ENCODE measurements at regions of chr2 and their contacts with region 1.

Region 1: DNA sequence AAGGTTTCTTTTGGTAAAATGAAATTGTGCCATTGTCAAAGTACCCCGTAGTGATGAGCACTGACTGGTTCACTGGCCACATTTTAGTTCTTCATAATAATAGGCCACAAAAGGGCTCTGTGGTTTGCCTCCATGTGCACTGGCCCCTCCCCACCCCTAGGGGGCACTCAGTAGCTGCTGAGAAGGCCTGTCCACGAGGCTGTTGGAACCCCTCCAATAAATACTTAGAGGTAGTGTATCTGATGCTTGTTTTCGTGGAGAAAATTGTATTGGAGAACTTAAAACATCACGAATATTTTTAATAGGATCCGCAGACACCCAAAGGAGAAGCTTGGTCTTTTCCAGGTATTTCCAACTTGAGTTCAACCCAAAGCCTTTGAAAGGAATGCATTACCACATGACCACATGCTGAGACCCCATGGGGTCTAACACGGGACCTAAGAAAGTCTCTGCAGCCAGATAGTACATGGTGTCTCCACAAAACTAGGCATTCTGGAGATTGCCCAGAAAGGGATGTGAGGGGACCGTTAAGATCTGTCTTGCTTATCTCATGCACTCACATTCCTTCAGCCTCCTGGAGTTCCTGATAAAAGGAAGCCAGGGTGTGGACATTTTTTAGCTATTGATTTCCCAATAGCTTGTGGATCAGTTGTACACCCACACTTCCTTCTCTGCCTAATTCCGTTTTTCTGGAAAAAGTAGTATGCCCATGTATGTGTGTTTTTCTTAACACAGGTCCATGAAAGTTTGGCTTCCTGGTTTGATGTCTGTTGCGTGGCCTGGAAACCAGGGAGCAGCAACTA is 28.5 kb upstream of the NOSTRIN start:
- DNase-seq: peak; percentile 62 to 80
- H3K4me3 ChIP-seq: no peak overlapping the region
- H3K4me3 Mint-ChIP-seq: no peak overlapping the region
- H3K27ac Mint-ChIP-seq: no peak overlapping the region
- H3K4me1 ChIP-seq: peaks cover 11% of the 10 kb centered on the region
- H3K4me1 Mint-ChIP-seq: no peaks in the 10 kb centered on the region
- H3K27me3 ChIP-seq: no peaks in the 10 kb centered on the region
- H3K27me3 Mint-ChIP-seq: no peaks in the 10 kb centered on the region
- CTCF ChIP-seq: peak; percentile 85 to 89

Region 2: GRCh38 chr2:168490015-168490874 is 283.7 kb before region 1 on chr2:
- CTCF ChIA-PET with region 1: no interaction called
- POLR2A ChIA-PET with region 1: no interaction called
- intact Hi-C with region 1: no loop called
- DNase-seq: no peak
- H3K4me3 ChIP-seq: no peak overlapping the region
- H3K4me3 Mint-ChIP-seq: peak overlapping the region; percentile 12
- H3K27ac Mint-ChIP-seq: peak overlapping the region; percentile 56
- H3K4me1 ChIP-seq: peaks cover 52% of the 10 kb centered on the region
- H3K4me1 Mint-ChIP-seq: peaks cover 59% of the 10 kb centered on the region
- H3K27me3 ChIP-seq: no peaks in the 10 kb centered on the region
- H3K27me3 Mint-ChIP-seq: no peaks in the 10 kb centered on the region
- CTCF ChIP-seq: no peak

Region 3: GRCh38 chr2:168573128-168573903 is 200.6 kb before region 1 on chr2:
- CTCF ChIA-PET with region 1: no interaction called
- POLR2A ChIA-PET with region 1: no interaction called
- intact Hi-C with region 1: no loop called
- DNase-seq: no peak
- H3K4me3 ChIP-seq: no peak overlapping the region
- H3K4me3 Mint-ChIP-seq: no peak overlapping the region
- H3K27ac Mint-ChIP-seq: no peak overlapping the region
- H3K4me1 ChIP-seq: no peaks in the 10 kb centered on the region
- H3K4me1 Mint-ChIP-seq: no peaks in the 10 kb centered on the region
- H3K27me3 ChIP-seq: no peaks in the 10 kb centered on the region
- H3K27me3 Mint-ChIP-seq: no peaks in the 10 kb centered on the region
- CTCF ChIP-seq: no peak

Region 4: DNA sequence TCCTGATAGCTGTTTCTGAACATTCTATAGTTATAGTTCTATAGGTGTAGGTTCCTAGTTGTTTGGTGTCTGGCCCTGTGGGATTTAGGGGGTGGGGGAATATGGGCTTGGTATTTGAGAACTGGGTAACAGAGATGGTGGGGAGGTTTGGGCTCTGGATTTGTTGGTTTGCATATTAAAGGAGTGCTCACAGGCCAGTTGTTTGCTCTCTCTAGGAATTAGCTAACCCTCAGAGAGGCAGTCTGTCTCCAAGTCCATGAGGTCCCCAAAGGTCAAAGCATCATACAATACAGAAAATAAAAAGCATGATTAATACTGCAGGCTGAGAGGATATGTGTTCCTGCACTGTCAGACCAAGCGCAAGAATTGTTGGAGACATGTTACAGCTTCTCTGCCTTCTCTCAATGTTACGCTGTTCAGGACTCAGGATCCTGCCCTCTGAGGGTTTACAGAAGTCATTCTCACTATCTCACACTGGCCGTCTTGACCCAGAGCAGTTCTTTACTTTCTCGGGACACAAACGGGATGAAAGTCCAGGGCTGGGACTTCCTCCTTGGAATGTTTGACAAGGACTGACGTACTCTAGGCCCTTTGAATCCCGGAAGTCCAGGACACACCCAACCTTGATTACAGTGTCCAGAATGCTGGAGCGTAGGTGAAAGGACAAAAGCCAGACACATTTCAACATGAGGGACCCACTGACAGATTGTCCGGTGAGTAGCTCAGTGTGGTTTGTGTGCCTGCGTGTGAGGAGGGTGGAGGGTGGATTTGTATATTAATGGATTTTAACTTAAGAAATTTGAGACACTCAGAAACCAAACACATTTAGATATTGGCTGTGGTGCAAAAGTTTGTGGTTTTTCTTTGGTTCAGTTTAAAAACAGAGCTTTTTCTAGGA is 28.3 kb after region 1 on chr2 and contains the start of gene NOSTRIN:
- CTCF ChIA-PET with region 1: interaction called, 6 read pairs
- POLR2A ChIA-PET with region 1: no interaction called
- intact Hi-C with region 1: loop called (anchors 2 kb)
- DNase-seq: peak; percentile 86 to 95
- H3K4me3 ChIP-seq: peak within 1 kb of the TSS; percentile 29
- H3K4me3 Mint-ChIP-seq: peak within 1 kb of the TSS; percentile 71
- H3K27ac Mint-ChIP-seq: peak within 1 kb of the TSS; percentile 96
- H3K4me1 ChIP-seq: peaks cover 44% of the 10 kb centered on the region
- H3K4me1 Mint-ChIP-seq: peaks cover 32% of the 10 kb centered on the region
- H3K27me3 ChIP-seq: no peaks in the 10 kb centered on the region
- H3K27me3 Mint-ChIP-seq: no peaks in the 10 kb centered on the region
- CTCF ChIP-seq: no peak
- total RNA-seq, gene NOSTRIN: 9.6 and 9.8 TPM in 2 replicates

Region 5: DNA sequence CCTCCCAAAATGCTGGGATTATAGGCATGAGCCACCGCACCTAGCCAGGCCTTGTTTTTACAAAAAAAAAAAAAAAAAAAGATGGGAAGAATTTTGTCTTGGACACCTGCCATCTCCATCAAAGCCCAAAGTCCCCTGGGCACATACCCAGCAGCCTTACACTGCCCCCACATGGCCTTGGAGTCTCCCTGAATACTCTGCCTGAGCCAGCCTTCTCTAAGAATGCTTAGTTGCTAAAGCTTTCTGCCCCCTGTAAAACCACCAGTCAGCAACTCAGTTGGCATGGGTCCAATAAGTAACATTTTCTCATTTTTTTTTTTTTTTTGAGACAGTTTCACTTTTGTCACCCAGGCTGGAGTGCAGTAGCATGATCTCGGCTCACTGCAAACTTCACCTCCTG is 75.7 kb after region 1 on chr2:
- CTCF ChIA-PET with region 1: no interaction called
- POLR2A ChIA-PET with region 1: no interaction called
- intact Hi-C with region 1: loop called (anchors 1 kb)
- DNase-seq: peak; percentile 43 to 44
- H3K4me3 ChIP-seq: no peak overlapping the region
- H3K4me3 Mint-ChIP-seq: no peak overlapping the region
- H3K27ac Mint-ChIP-seq: no peak overlapping the region
- H3K4me1 ChIP-seq: no peaks in the 10 kb centered on the region
- H3K4me1 Mint-ChIP-seq: no peaks in the 10 kb centered on the region
- H3K27me3 ChIP-seq: no peaks in the 10 kb centered on the region
- H3K27me3 Mint-ChIP-seq: no peaks in the 10 kb centered on the region
- CTCF ChIP-seq: peak in 1 of 2 experiments; percentile 42

Region 6: DNA sequence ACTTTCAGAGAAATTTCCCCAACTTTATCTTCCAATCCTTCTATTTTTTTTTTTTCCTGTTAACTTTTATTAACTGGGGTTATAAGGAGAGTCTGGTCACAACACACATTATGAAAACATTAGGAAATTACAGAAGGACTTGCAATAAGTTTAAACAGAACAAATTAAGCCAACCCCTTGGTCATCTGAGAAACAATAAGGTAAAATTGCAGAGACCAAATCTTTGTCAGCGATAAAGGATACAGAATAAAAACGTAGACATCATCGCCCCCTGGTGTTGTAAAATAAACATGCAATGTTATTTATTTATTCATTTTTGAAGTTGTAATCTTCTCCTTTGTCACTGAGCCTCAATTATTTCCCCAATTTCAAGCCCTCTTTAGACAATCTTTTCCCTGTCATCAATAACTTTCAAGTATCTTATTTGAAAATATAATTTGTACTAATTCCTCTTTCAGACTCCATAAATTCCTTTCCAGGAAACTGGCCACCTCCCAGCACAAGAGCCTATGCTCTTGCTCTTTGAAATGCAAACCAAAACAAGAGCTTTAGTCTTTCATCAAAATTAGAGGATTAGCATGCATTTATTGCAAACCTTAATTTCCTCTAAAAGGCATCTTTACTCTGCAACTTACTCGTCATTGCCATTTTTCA is 146.7 kb after region 1 on chr2:
- CTCF ChIA-PET with region 1: interaction called, 4 read pairs
- POLR2A ChIA-PET with region 1: no interaction called
- intact Hi-C with region 1: loop called (anchors 1 kb)
- DNase-seq: peak in 1 of 2 experiments; percentile 45
- H3K4me3 ChIP-seq: no peak overlapping the region
- H3K4me3 Mint-ChIP-seq: no peak overlapping the region
- H3K27ac Mint-ChIP-seq: no peak overlapping the region
- H3K4me1 ChIP-seq: no peaks in the 10 kb centered on the region
- H3K4me1 Mint-ChIP-seq: no peaks in the 10 kb centered on the region
- H3K27me3 ChIP-seq: peaks cover 2% of the 10 kb centered on the region; the same call in 1 of the 2 replicates
- H3K27me3 Mint-ChIP-seq: peaks cover 24% of the 10 kb centered on the region
- CTCF ChIP-seq: peak; percentile 42 to 51